IMR-90 (cell line): ENCODE measurements at regions of chr17 and their contacts with region 1.

Region 1: DNA sequence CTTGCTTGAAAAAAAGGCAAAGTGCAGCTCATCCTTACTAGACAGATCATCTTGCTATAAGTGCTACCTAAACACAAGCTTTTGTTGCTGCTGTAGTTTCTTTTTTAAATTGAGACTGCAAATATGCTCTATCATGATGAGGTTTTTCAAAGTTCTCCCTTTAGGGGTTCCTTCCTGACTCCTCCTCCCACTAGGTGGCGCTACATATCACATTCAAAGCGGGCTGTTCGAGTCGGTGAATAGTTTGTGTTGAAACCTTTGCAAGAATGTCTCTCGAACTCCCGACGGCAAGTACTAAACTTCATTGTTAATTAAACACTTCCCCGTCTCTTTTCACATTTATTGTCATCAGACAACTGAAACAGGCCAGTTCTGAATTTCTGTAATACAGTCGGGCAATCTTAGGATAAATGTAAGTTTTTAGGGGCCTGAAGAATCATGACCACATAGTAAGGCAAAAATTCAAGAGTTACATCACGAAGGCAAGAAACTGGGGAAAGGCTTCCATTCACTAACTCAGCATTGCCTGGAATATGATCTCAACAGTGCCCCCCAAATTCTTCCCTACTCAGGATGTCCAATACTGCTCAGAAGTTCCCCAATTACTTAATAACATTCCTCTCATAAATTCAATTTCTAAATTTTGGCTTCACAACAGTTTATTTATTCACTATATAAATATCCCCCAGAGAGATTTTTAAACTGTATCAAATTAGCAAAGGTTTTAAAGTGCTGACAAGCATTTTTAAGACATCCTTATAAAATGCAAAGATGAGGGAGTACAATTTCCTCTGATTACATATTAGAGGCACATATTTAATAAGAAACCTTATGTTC is 6.7 kb downstream of the HS3ST3A1 start:
- DNase-seq: peak; percentile 89
- ATAC-seq: peak; percentile 44
- H3K4me3 ChIP-seq: peak overlapping the region; percentile 9; the same call in 1 of the 2 replicates
- H3K27ac ChIP-seq: peak overlapping the region; percentile 59; the same call in 1 of the 2 replicates
- H3K4me1 ChIP-seq: peaks cover 21% of the 10 kb centered on the region
- H3K27me3 ChIP-seq: no peaks in the 10 kb centered on the region
- CTCF ChIP-seq: peak; percentile 85
- POLR2A ChIP-seq: 0 out of 2 replicates have a peak, but pooled peaks have one; percentile 25
- RAD21 ChIP-seq: peak; percentile 75

Region 2: GRCh38 chr17:13031718-13032350 is 563.1 kb before region 1 on chr17:
- CTCF ChIA-PET with region 1: no interaction called
- POLR2A ChIA-PET with region 1: no interaction called
- dilution Hi-C with region 1: no loop called
- in situ Hi-C with region 1: no loop called
- intact Hi-C with region 1: loop called (anchors 1 kb)
- DNase-seq: peak; percentile 47
- ATAC-seq: peak; percentile 75
- H3K4me3 ChIP-seq: no peak overlapping the region
- H3K27ac ChIP-seq: no peak overlapping the region
- H3K4me1 ChIP-seq: no peaks in the 10 kb centered on the region
- H3K27me3 ChIP-seq: peaks cover 10% of the 10 kb centered on the region
- CTCF ChIP-seq: peak; percentile 68
- POLR2A ChIP-seq: no peak
- RAD21 ChIP-seq: peak; percentile 20; the same call in 1 of the 2 replicates

Region 3: GRCh38 chr17:13143001-13143400 is 452.0 kb before region 1 on chr17:
- CTCF ChIA-PET with region 1: interaction called, 11 read pairs
- POLR2A ChIA-PET with region 1: no interaction called
- dilution Hi-C with region 1: no loop called
- in situ Hi-C with region 1: no loop called
- intact Hi-C with region 1: no loop called
- DNase-seq: no peak
- ATAC-seq: no peak
- H3K4me3 ChIP-seq: no peak overlapping the region
- H3K27ac ChIP-seq: no peak overlapping the region
- H3K4me1 ChIP-seq: no peaks in the 10 kb centered on the region
- H3K27me3 ChIP-seq: no peaks in the 10 kb centered on the region; the same call in 1 of the 2 replicates
- CTCF ChIP-seq: no peak
- POLR2A ChIP-seq: no peak
- RAD21 ChIP-seq: no peak

Region 4: DNA sequence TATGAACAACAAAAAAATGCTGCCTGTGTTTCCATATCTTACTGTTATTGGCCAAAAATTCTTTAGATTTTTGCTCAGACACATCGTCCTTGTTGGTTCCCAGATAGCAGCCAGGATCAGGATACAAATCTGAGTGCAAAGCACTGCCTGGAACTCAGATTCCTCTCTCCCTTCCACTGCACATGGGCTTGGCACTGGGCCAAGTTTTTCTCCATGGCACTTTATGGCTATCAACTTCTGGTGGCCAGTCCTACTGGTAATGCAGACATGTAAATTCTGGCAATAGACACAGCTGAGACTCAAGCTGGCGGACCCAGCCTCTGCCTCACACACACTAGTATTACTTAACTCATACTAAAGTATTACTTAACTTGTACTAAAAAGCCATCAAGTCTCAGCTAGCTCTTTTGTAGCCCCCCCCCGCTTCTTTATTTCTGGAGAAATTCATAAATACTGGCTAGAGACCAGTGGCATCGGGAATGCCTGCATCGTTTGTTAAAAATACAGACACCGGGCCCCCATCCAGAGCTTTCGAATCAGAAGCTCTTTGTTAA is 293.2 kb after region 1 on chr17:
- CTCF ChIA-PET with region 1: no interaction called
- POLR2A ChIA-PET with region 1: no interaction called
- dilution Hi-C with region 1: no loop called
- in situ Hi-C with region 1: no loop called
- intact Hi-C with region 1: loop called (anchors 2 kb)
- DNase-seq: peak; percentile 35
- ATAC-seq: peak; percentile 30
- H3K4me3 ChIP-seq: no peak overlapping the region
- H3K27ac ChIP-seq: no peak overlapping the region
- H3K4me1 ChIP-seq: peaks cover 10% of the 10 kb centered on the region
- H3K27me3 ChIP-seq: no peaks in the 10 kb centered on the region
- CTCF ChIP-seq: no peak
- POLR2A ChIP-seq: no peak
- RAD21 ChIP-seq: no peak

Region 5: DNA sequence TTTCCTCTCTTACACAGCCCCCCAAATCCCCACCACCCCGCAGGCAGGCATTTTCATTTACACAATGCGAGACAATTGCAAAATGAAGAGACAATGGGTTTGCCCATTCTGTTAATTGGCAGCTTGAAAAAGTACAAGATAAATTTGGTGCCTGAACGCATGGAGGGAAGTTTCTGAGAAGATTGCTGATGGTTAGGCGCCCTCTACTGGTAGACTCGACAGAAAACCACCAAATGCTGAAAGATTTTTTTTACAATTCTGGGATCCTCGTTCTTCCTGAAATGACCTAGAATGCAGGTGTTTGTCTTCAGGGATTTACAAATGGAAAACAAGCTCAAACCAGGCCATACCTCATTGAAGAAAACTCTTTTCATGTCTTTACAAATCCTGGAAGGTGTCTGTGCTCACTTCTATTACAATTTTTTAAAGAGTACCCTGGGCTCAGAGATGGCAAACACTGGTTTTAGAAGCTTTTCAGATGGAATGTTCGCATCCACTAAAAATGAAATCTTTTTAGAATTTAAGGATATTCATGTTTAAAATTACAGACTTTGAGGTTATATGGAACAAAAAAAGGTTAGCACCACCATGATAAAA is 1331.6 kb after region 1 on chr17:
- CTCF ChIA-PET with region 1: interaction called, 4 read pairs
- POLR2A ChIA-PET with region 1: no interaction called
- dilution Hi-C with region 1: no loop called
- in situ Hi-C with region 1: loop called (anchors 10 kb)
- intact Hi-C with region 1: loop called (anchors 5 kb)
- DNase-seq: peak; percentile 74
- ATAC-seq: peak; percentile 49; the same call in 1 of the 2 replicates
- H3K4me3 ChIP-seq: no peak overlapping the region
- H3K27ac ChIP-seq: no peak overlapping the region
- H3K4me1 ChIP-seq: no peaks in the 10 kb centered on the region
- H3K27me3 ChIP-seq: peaks cover 4% of the 10 kb centered on the region
- CTCF ChIP-seq: peak; percentile 89
- POLR2A ChIP-seq: 0 out of 2 replicates have a peak, but pooled peaks have one; percentile 31
- RAD21 ChIP-seq: peak; percentile 99

Region 6: DNA sequence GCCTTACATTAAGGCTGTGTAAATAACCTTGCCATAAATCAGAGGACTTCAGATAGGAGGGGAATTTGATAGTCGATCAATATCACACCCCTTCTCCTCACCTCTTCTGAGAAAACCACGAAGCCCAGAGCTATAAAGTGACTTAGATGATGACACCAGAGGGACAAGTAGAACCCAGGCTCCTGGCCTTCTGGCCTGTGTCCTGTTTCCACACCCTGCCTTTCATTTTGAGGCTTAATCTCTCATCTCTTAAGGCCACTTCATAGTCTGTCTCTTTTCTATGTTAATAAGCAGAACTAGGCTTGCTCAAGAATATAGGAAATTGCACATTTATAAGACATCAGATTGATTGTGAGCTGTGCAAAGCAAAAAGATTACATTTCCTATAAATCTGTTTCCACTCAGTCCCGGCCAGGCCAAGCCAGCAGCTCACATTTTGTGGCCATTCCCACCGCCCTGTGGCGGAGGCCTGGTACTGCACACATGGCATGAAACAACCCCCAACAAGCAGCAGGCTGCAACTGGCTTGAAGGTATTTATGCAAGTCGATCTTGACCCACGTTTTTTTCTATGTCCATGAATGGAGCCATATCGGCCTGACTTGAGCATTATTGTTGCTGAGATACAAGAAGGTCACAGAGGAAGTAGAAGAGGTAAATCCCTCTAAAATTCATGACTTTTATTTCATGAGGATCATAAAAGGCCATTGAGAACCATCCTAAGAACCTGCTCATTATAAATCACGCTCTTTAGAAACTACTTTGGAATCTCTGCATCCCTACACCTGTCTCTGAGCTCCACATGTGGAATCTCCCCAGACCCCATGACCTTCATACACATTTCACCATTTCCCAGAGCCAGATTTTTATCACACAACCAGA is 1576.4 kb after region 1 on chr17:
- CTCF ChIA-PET with region 1: no interaction called
- POLR2A ChIA-PET with region 1: no interaction called
- dilution Hi-C with region 1: no loop called
- in situ Hi-C with region 1: no loop called
- intact Hi-C with region 1: loop called (anchors 5 kb)
- DNase-seq: peak; percentile 75
- ATAC-seq: peak; percentile 100
- H3K4me3 ChIP-seq: no peak overlapping the region
- H3K27ac ChIP-seq: no peak overlapping the region
- H3K4me1 ChIP-seq: no peaks in the 10 kb centered on the region
- H3K27me3 ChIP-seq: peaks cover 7% of the 10 kb centered on the region
- CTCF ChIP-seq: peak; percentile 80
- POLR2A ChIP-seq: no peak
- RAD21 ChIP-seq: peak; percentile 85